ENCODE measurements at regions of chr9 and their contacts with region 1.

Region 1: GRCh38 chr9:136965771-136966484 is 11.4 kb upstream of the PTGDS start:
- DNase-seq: peak; percentile 65
- H3K4me3 Mint-ChIP-seq: peak overlapping the region; percentile 55
- H3K27ac Mint-ChIP-seq: peak overlapping the region; percentile 93
- H3K4me1 Mint-ChIP-seq: peaks cover 41% of the 10 kb centered on the region
- H3K27me3 Mint-ChIP-seq: peaks cover 2% of the 10 kb centered on the region

Region 2: GRCh38 chr9:136820971-136821825 is 144.7 kb before region 1 on chr9:
- CTCF ChIA-PET with region 1: no interaction called
- POLR2A ChIA-PET with region 1: no interaction called
- DNase-seq: no peak
- H3K4me3 Mint-ChIP-seq: no peak overlapping the region
- H3K27ac Mint-ChIP-seq: no peak overlapping the region
- H3K4me1 Mint-ChIP-seq: peaks cover 4% of the 10 kb centered on the region
- H3K27me3 Mint-ChIP-seq: no peaks in the 10 kb centered on the region

Region 3: DNA sequence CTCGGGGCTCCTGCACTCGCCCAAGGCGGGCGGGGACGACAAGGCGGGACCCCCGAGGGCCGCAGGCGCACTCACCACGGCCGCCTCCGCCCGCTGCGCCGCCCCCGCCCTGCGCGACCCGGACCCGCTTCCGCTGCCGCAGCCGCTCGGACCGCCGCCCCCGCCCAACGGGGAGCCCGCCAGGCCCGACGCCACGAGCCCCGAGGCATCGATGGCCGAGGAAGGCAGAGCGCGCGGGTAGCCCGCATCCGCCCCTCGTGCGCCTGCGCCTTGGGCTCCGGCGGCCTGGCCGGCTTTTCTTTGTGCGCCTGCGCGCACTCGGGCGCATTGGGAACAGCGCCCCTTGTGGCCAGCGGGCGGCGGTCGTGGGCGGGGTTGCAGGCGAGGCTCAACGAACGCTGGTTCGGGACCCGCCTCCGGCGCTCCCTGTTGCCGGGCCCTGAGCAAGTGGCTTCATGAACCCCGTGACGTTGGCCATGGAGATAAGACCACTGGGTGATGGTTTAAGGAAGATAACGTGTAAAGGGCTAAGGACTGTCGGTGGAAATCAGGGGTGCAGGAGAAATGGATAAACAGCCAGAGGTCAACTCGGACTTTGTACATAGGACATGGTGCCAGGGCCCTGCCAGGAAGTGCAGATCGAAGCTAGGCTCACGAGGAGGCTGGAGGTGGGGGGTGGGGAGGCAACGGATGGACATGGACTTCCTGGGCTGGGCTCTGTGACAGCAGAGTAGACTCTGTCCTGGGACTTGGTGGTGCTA is 21.2 kb before region 1 on chr9 and contains the starts of genes C8G and FBXW5:
- CTCF ChIA-PET with region 1: interaction called, 9 read pairs
- POLR2A ChIA-PET with region 1: interaction called, 19 read pairs
- DNase-seq: peak; percentile 96
- H3K4me3 Mint-ChIP-seq: peak within 1 kb of the TSS; percentile 80
- H3K27ac Mint-ChIP-seq: peak within 1 kb of the TSS; percentile 77
- H3K4me1 Mint-ChIP-seq: peaks cover 25% of the 10 kb centered on the region
- H3K27me3 Mint-ChIP-seq: no peaks in the 10 kb centered on the region
- total RNA-seq, gene C8G: 1.5 to 3.2 TPM
- total RNA-seq, gene FBXW5: 118 to 119 TPM

Region 4: DNA sequence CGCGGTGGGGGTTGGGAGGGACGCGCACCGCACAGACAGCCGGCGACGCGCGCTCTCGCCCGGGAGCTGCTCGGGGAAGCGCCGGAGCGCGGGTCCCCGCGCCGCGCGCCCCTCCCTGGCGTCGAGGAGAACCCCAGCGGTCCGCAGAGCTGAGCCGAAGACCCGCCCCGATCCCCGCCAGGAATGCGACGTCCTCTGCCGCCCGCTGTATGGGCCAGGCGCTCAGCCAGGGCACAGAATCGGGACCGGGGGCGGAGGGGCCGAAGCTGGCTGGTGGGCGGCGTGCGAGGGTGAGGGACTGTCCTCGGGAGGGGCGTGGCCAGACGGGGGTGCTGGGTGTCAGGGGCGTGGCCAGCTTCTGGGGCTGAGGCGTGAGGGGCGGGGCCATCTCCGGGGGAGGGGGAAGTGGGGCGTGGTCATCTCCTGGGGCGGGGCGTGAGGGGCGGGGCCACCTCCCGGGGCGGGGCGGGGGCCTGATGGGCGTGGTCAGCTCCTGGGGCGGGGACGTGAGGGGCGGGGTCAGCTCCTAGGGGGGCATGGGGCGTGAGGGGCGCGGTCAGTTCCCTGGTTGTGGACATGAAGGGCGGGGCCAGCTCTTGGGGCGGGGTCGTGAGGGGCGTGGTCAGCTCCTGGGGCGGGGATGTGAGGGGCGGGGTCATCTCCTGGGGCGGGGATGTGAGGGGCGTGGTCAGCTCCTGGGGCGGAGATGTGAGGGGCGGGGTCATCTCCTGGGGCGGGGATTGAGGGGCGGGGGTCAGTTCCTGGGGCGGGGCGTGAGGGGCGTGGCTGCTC is 12.3 kb after region 1 on chr9:
- CTCF ChIA-PET with region 1: interaction called, 7 read pairs
- POLR2A ChIA-PET with region 1: interaction called, 70 read pairs
- DNase-seq: peak; percentile 83
- H3K4me3 Mint-ChIP-seq: no peak overlapping the region
- H3K27ac Mint-ChIP-seq: no peak overlapping the region
- H3K4me1 Mint-ChIP-seq: peaks cover 33% of the 10 kb centered on the region
- H3K27me3 Mint-ChIP-seq: peaks cover 1% of the 10 kb centered on the region